A549 (cell line): ENCODE measurements at regions of chr2 and their contacts with region 1.

Region 1: DNA sequence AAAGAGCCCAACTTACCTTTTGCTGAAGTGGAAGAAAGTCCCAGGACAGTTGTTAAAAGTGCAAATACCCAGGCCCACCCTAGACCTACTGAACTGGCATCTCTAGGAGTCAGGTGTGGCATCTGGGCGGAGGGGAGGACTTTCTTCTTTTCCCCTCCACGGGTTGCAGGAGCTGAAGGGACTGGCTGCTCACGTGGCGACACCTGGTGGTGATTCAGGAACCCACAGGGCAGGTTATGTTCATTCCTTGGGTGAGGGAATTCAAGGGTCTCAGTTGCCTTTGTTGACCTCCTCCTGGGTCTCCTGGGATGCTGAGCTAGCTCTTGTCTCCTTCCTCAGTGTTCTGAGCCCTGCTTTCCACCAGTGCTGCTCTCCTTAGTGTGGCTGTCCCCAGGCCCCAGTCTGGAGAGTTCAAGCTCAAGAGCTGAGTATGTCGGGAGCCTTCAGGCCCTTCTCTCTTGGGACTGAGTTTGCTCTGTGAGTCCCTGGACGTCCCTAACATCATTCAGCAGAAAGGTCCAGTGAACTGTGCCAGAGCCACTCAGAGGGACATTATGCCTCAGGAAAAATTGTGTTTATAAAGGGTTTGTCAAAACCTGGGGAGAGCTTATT is 56.9 kb downstream of the DYSF start:
- DNase-seq: peak; percentile 64 to 91
- ATAC-seq: peak; percentile 73 to 91; a peak in 5 of 6 replicates
- H3K4me3 ChIP-seq: no peak overlapping the region
- H3K27ac ChIP-seq: no peak overlapping the region
- H3K4me1 ChIP-seq: no peaks in the 10 kb centered on the region
- CTCF ChIP-seq: peak; percentile 98
- EP300 ChIP-seq: no peak
- POLR2A ChIP-seq: no peak
- RAD21 ChIP-seq: peak; percentile 94 to 95

Region 2: DNA sequence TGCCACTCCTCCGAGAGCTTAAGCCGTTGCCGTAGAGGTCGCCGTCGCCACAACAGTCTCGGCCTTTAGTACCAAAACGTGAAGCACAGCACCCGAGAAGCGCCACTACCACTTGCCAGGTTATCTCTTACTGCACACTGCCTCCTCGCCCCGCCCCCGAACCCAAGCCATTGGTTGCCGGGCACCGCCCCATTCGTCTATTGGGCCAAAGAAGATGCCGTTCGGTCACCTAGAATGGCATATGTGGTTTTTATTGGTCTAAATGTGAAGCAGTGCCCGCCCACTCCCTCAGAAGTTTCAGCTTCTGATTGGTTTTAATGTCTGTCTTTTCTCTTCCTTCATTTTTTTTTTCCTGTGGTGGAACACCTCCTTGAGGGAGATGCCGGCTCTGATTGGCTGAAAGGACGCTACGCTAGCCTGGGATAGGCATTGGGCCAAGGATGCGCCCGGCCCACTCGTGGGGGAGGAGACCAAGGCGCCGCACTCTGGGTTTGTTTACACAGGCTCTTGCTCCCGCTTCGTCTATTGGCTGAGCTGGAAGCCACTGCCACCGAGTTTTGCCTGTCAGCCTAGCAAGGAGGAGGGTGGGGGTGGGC is 283.2 kb before region 1 on chr2 and contains the start of gene PAIP2B:
- CTCF ChIA-PET with region 1: interaction called, 54 read pairs
- POLR2A ChIA-PET with region 1: no interaction called
- DNase-seq: peak; percentile 93 to 100
- ATAC-seq: peak; percentile 94 to 96
- H3K4me3 ChIP-seq: peak within 1 kb of the TSS; percentile 90
- H3K27ac ChIP-seq: peak within 1 kb of the TSS; percentile 65 to 87
- H3K4me1 ChIP-seq: peaks cover 5% of the 10 kb centered on the region; the same call in 1 of the 3 replicates
- CTCF ChIP-seq: no peak; the same call in 2 of the 3 replicates
- EP300 ChIP-seq: no peak
- POLR2A ChIP-seq: peak; percentile 42
- RAD21 ChIP-seq: no peak
- polyA plus RNA-seq, gene PAIP2B: 0.84 and 0.94 TPM in 2 replicates

Region 3: GRCh38 chr2:71331581-71332434 is 178.5 kb before region 1 on chr2 and contains the start of gene ZNF638:
- CTCF ChIA-PET with region 1: interaction called, 10 read pairs
- POLR2A ChIA-PET with region 1: interaction called, 4 read pairs
- DNase-seq: peak; percentile 92 to 94
- ATAC-seq: peak; percentile 98 to 99
- H3K4me3 ChIP-seq: peak within 1 kb of the TSS; percentile 89
- H3K27ac ChIP-seq: peak within 1 kb of the TSS; percentile 88 to 96
- H3K4me1 ChIP-seq: peaks cover 29% of the 10 kb centered on the region
- CTCF ChIP-seq: peak; percentile 95
- EP300 ChIP-seq: no peak
- POLR2A ChIP-seq: peak; percentile 90
- RAD21 ChIP-seq: peak in 1 of 2 experiments; percentile 63; a peak in 3 of 5 replicates
- polyA plus RNA-seq, gene ZNF638: 148 and 160 TPM in 2 replicates

Region 4: DNA sequence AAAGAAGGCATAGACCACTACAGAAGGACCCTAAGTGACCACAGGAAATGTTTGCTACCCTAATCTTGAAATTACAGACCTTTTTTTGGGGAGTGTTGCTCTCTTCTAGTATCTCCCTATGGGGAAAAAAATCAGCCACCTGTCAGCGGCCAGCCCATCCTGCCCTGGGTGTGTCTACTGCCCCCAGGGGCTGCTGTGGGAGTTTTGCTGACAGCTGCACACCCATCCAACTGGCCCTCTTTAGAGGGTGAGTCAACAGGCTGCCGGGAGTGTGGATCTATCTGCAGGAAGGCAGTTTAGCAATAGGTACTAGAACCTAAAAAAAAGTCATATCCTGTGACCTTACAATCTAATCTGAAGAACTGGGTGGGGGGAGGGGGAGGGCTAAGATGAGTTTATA is 57.7 kb before region 1 on chr2:
- CTCF ChIA-PET with region 1: interaction called, 311 read pairs
- POLR2A ChIA-PET with region 1: no interaction called
- DNase-seq: peak; percentile 40 to 46
- ATAC-seq: peak; percentile 62 to 70; a peak in 5 of 6 replicates
- H3K4me3 ChIP-seq: no peak overlapping the region
- H3K27ac ChIP-seq: no peak overlapping the region
- H3K4me1 ChIP-seq: peaks cover 29% of the 10 kb centered on the region
- CTCF ChIP-seq: no peak
- EP300 ChIP-seq: no peak
- POLR2A ChIP-seq: no peak
- RAD21 ChIP-seq: no peak

Region 5: GRCh38 chr2:71486881-71487640 is 23.2 kb before region 1 on chr2:
- CTCF ChIA-PET with region 1: interaction called, 17 read pairs
- POLR2A ChIA-PET with region 1: no interaction called
- DNase-seq: no peak
- ATAC-seq: no peak
- H3K4me3 ChIP-seq: no peak overlapping the region
- H3K27ac ChIP-seq: no peak overlapping the region
- H3K4me1 ChIP-seq: no peaks in the 10 kb centered on the region
- CTCF ChIP-seq: no peak
- EP300 ChIP-seq: no peak
- POLR2A ChIP-seq: no peak
- RAD21 ChIP-seq: no peak

Region 6: DNA sequence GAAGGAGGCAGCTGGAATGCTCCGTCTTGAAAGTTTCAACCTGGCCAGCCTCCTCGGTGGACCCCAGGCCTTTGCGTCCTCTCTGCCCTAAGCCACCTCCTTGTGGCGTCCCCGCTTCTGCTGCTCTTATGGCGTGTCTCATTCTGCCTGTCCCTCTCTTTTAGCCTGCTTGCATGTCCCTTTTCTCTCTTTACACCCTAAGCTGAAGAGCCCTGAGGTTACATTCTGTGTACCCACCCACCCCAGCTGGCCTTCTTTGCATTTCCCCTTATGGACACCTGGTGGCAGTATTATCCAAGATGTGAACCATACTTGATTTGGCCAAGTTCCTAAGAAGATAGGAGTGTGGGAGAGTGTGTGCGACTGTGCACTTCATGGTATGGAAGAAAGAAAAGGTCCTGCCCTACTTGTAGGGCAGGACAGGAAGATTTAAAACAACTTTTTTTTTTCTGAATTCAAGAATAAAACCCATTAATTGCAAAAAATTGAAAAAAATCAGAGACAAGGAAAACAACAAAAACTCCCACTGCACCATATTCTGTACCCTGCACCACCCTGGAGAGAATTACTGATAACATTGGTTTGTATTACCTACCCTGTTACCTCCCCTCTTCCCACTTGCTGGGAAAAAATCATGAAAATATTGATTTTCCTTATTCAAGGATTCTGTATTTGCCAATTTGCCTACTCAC is 20.5 kb after region 1 on chr2:
- CTCF ChIA-PET with region 1: interaction called, 25 read pairs
- POLR2A ChIA-PET with region 1: no interaction called
- DNase-seq: peak; percentile 65 to 83
- ATAC-seq: peak; percentile 48 to 87; a peak in 5 of 6 replicates
- H3K4me3 ChIP-seq: no peak overlapping the region
- H3K27ac ChIP-seq: no peak overlapping the region
- H3K4me1 ChIP-seq: no peaks in the 10 kb centered on the region
- CTCF ChIP-seq: peak; percentile 66
- EP300 ChIP-seq: no peak
- POLR2A ChIP-seq: no peak
- RAD21 ChIP-seq: peak; percentile 67 to 84

Region 7: DNA sequence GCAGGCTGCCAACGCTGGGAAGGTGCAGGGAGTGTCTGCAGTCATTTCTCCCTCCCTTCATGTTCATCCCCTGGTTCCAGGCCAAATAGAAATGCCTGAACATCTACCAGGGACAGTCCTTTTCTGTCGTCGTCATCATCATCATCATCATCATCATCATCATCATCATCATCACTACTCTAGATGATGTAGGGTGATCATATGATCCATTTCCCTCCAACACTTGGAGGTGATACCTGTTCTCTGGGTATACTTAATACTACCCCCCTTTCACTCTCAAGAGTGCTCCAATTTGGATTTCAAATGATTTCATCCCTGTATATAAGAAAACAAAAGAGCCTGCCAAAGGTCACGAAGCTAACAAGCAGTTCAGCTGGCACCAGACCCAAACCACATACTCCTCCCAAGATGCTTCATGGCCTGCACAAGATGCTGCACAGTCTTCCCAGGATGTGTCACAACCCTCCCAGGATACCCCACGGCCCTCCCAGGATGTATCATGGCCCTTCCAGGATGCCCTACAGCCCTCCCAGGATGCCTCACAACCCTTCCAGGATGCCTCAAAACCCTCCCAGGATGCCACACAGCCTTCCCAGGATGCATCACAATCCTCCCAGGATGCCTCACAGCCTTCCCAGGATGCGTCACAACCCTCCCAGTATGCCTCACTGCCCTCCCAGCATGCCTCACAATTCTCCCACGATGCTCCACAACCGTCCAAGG is 201.0 kb after region 1 on chr2:
- CTCF ChIA-PET with region 1: no interaction called
- POLR2A ChIA-PET with region 1: no interaction called
- DNase-seq: peak in 1 of 2 experiments; percentile 18
- ATAC-seq: peak in 1 of 2 experiments; percentile 51; a peak in 3 of 6 replicates
- H3K4me3 ChIP-seq: no peak overlapping the region
- H3K27ac ChIP-seq: peak overlapping the region in 1 of 2 experiments; percentile 12; a peak in 1 of 6 replicates
- H3K4me1 ChIP-seq: 0 out of 3 replicates have a peak, but pooled peaks cover 6% of the 10 kb centered on the region
- CTCF ChIP-seq: no peak
- EP300 ChIP-seq: no peak
- POLR2A ChIP-seq: no peak
- RAD21 ChIP-seq: no peak